Activated naive CD4-positive, alpha-beta T cell treated with anti-CD3 and anti-CD28 coated beads for 36 hours (primary cell): ENCODE measurements at regions of chr1 and their contacts with region 1.

Region 1: DNA sequence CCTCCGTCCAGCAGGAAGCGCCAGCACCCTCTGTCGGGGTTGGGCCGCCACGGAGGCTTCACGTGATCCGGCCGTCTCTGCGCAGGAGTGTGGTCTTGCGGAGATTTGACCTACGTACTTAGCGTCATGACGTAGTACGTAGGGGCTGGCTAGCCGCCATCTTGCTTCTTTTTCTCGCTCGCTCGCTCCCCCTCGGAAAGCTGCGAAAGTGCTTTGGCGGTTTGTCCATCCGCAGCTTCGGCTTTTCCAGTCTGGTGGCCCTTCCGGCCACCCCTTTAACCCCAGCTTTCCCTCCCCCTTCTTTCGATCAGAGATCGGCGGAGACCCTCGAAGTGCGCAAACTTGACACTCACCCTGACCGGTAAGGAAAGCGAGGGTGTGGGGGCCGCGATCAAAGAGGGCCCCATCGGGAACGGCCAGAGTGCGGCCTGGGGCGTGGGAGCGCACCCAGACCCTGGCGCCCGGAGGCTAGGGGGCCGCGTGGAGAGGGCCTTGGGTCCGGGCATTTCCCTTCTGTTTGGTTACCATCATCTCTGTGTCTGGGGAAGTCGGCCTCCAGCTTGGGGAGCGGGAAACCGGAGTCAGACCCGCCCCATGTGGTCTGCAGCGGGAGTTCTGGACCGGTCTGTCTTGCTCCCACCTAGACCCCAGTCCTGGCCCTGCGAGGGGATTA is at the start of gene PRRC2C:
- DNase-seq: peak; percentile 96
- H3K4me3 Mint-ChIP-seq: peak within 1 kb of the TSS; percentile 84
- H3K27ac Mint-ChIP-seq: peak within 1 kb of the TSS; percentile 94
- H3K4me1 Mint-ChIP-seq: peaks cover 39% of the 10 kb centered on the region
- H3K27me3 Mint-ChIP-seq: no peaks in the 10 kb centered on the region
- total RNA-seq, gene PRRC2C: 199 to 206 TPM

Region 2: GRCh38 chr1:169699711-169700110 is 1785.8 kb before region 1 on chr1:
- CTCF ChIA-PET with region 1: no interaction called
- intact Hi-C with region 1: loop called (anchors 5 kb)
- DNase-seq: no peak
- H3K4me3 Mint-ChIP-seq: peak overlapping the region; percentile 22
- H3K27ac Mint-ChIP-seq: peak overlapping the region; percentile 94
- H3K4me1 Mint-ChIP-seq: peaks cover 95% of the 10 kb centered on the region
- H3K27me3 Mint-ChIP-seq: no peaks in the 10 kb centered on the region

Region 3: DNA sequence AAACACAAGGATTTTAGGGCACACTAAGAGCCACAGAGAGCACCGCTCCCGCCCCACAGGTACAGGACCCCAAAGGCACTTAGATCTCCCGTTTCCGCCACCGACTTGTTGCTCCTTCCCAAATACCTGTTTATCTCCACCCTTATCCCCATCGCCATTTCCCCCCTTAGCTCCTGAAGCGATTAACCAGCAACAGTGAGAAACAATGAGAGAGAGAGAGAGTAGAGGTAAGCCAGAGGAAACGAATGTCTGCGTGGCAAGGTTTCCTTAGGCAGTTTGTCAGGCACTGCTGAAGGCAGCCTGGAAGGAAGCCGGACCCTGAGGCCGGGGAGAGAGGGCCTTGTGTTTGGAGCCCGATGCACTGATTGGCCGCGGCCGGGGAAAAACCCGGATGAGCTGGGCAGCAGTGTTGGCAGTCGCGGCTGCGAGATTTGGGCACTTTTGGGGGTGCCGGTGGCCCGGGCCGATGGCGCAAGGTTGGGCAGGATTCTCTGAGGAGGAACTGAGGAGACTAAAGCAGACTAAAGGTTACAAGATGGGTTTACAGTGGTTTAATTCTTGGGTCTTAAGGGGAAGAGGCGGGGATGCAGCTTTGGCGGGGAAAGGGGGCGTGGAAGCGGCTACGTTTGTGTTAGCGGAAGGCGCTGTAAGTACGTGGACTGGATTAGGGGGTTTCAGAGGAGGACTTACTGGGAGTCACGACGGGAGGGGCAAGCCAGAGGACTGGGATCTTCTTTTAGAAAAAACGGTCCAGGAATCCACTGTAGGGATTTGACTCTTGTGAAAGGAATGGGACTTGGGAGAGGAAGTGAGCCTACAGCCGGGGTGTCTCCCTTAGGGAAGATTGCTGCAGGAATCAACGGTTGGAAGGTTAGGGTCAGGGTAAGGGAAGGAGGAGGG is 953.5 kb before region 1 on chr1 and contains the start of gene GORAB:
- CTCF ChIA-PET with region 1: no interaction called
- intact Hi-C with region 1: loop called (anchors 5 kb)
- DNase-seq: peak; percentile 93
- H3K4me3 Mint-ChIP-seq: no peak within 1 kb of the TSS
- H3K27ac Mint-ChIP-seq: no peak within 1 kb of the TSS
- H3K4me1 Mint-ChIP-seq: peaks cover 13% of the 10 kb centered on the region
- H3K27me3 Mint-ChIP-seq: no peaks in the 10 kb centered on the region
- total RNA-seq, gene GORAB: 9.5 TPM

Region 4: DNA sequence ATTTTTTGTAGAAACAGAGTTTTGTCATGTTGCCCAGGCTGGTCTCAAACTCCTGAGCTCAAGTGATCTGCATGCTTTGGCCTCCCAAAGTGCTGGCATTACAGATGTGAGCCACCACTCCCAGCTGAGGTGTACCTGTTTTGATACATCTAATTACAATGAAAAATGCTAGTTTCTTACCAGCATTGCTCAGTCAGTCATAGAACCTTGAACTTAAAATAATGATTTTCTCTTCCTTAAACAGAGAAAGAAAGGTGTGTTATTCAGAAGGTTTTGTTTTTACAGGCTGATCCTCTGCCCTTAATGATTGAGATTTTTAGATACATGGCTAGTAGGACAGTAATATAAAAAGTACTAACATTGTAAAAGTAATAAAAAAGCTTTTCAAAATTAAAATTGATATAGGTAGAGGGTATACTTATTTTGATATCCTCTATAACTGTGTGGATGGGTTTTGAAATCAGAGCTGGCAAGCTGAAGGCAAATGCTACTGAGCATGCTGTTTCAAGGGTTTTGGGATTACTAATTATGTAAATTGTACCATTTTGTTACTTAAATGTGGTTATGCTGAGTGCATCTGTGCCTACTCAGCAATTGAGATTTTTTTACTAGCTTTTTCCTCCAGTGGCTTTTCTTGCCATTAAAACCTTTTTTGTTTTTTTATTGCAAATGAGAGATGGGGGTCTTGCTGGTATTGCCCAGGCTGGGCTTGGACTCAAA is 16.0 kb after region 1 on chr1:
- CTCF ChIA-PET with region 1: interaction called, 10 read pairs
- intact Hi-C with region 1: loop called (anchors 1 kb)
- DNase-seq: no peak
- H3K4me3 Mint-ChIP-seq: no peak overlapping the region
- H3K27ac Mint-ChIP-seq: peak overlapping the region; percentile 71
- H3K4me1 Mint-ChIP-seq: peaks cover 87% of the 10 kb centered on the region
- H3K27me3 Mint-ChIP-seq: no peaks in the 10 kb centered on the region

Region 5: GRCh38 chr1:171566467-171566866 is 81.0 kb after region 1 on chr1:
- CTCF ChIA-PET with region 1: interaction called, 7 read pairs
- intact Hi-C with region 1: loop called (anchors 2 kb)
- DNase-seq: no peak
- H3K4me3 Mint-ChIP-seq: no peak overlapping the region
- H3K27ac Mint-ChIP-seq: no peak overlapping the region
- H3K4me1 Mint-ChIP-seq: peaks cover 12% of the 10 kb centered on the region
- H3K27me3 Mint-ChIP-seq: no peaks in the 10 kb centered on the region

Region 6: DNA sequence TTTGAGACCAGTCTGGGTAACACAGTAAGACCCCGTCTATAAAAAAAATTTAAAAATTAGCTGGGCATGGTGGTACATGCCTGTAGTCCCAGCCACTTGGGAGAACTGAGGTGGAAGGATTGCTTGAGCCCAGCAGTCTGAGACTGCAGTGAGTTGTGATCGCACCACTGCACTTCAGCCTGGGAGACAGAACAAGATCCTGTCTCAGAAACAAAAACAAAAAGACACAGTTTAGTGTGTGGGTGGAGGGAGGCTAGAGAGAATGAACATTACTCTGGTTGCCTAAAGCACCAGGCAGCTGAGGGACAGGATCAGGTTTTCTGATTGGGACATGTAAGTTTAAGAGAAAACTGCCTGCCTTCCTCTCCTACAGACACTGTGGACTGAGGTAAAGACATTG is 214.0 kb after region 1 on chr1:
- CTCF ChIA-PET with region 1: no interaction called
- intact Hi-C with region 1: no loop called
- DNase-seq: no peak
- H3K4me3 Mint-ChIP-seq: no peak overlapping the region
- H3K27ac Mint-ChIP-seq: no peak overlapping the region
- H3K4me1 Mint-ChIP-seq: no peaks in the 10 kb centered on the region
- H3K27me3 Mint-ChIP-seq: no peaks in the 10 kb centered on the region

Region 7: GRCh38 chr1:171741872-171742576 is 256.5 kb after region 1 on chr1 and contains the start of gene VAMP4:
- CTCF ChIA-PET with region 1: interaction called, 5 read pairs
- intact Hi-C with region 1: loop called (anchors 1 kb)
- DNase-seq: peak; percentile 90
- H3K4me3 Mint-ChIP-seq: peak within 1 kb of the TSS; percentile 96
- H3K27ac Mint-ChIP-seq: peak within 1 kb of the TSS; percentile 99
- H3K4me1 Mint-ChIP-seq: peaks cover 40% of the 10 kb centered on the region
- H3K27me3 Mint-ChIP-seq: no peaks in the 10 kb centered on the region
- total RNA-seq, gene VAMP4: 10.5 to 10.9 TPM

Region 8: DNA sequence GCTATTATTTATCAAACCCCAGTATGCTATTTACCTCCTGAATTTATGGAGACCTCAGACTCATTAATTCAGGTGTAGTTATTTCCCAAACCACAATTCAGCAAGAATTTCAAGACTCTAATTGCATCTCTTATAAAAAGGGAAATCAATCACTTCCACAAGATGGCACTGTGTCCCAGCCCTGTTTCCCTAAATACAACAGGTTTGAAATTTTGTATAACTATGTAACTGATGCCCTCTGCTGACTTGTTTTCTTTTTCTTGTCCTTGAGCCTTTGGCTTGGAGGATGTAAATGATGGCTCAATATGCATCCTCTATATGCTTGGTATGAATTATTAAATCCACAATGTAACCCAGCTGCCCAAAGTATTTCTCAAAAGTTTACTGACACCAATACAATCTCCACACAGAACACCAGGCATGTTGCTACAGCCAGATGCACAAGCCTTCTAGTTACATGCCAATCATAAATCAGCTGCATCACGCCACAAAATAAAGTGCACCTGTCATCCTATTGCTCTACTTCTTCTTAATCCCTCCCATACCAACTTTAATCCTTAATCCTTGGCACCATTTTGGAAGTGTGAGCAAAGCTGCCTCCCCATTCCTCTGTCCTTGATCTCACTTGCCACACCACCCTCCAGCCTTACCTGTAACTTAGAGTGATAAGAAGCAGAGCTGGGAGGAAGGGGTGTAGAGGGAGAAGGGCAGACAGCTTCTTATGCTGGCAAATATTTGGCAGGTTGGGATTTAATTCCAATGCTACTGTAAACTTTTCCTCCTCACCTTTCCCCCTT is 944.0 kb after region 1 on chr1:
- CTCF ChIA-PET with region 1: interaction called, 3 read pairs
- intact Hi-C with region 1: loop called (anchors 5 kb)
- DNase-seq: peak; percentile 77
- H3K4me3 Mint-ChIP-seq: no peak overlapping the region
- H3K27ac Mint-ChIP-seq: no peak overlapping the region
- H3K4me1 Mint-ChIP-seq: peaks cover 46% of the 10 kb centered on the region
- H3K27me3 Mint-ChIP-seq: no peaks in the 10 kb centered on the region